Activated CD4-positive, alpha-beta T cell treated with anti-CD3 and anti-CD28 coated beads for 36 hours (primary cell): ENCODE measurements at regions of chr7 and their contacts with region 1.

Region 1: DNA sequence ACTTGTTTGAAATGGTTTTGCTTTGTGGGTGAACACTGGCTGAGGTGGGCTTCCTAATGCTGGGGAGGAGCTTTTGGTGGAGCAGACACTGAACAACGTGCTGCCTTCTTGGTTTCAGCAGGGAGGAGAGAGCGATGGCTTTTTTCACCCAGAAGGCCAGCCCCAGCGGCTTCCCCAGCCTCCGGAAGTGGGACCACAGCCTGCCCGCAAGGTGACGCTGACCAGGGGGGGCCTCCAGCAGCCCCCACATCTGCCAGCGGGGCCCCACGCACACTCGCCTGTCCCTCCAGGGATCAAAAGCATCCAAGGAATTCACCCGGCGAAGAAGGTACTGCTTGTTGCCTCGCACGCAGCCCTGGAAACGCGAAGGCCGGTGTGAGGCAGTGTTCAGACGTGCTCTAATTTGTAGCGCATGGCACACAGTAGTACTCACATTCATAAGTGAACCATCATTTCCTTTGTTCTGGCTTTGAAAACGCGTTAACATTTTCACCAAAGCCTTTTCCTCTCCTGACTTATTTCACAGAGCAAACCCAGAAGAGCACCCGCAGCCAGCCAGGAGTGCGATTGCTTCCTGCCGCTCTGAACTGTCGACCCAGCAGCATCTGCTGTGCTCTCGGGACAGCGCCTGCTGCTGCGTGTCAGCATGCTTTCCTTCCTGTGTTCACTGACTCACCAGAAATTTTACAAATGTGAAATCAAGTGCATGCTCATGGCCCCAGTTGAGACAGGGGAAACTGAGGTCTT is 48.4 kb downstream of the SHH start:
- DNase-seq: peak; percentile 84
- ATAC-seq: peak; percentile 83
- H3K4me3 Mint-ChIP-seq: peak overlapping the region; percentile 74
- H3K27ac Mint-ChIP-seq: peak overlapping the region; percentile 97
- H3K4me1 Mint-ChIP-seq: peaks cover 52% of the 10 kb centered on the region
- H3K27me3 Mint-ChIP-seq: no peaks in the 10 kb centered on the region

Region 2: GRCh38 chr7:155003376-155004214 is 760.3 kb before region 1 on chr7:
- CTCF ChIA-PET with region 1: no interaction called
- POLR2A ChIA-PET with region 1: no interaction called
- intact Hi-C with region 1: loop called in 1 of 2 experiments (anchors 2 kb)
- DNase-seq: peak; percentile 91
- ATAC-seq: peak; percentile 82
- H3K4me3 Mint-ChIP-seq: peak overlapping the region; percentile 91
- H3K27ac Mint-ChIP-seq: peak overlapping the region; percentile 85
- H3K4me1 Mint-ChIP-seq: peaks cover 12% of the 10 kb centered on the region
- H3K27me3 Mint-ChIP-seq: no peaks in the 10 kb centered on the region

Region 3: DNA sequence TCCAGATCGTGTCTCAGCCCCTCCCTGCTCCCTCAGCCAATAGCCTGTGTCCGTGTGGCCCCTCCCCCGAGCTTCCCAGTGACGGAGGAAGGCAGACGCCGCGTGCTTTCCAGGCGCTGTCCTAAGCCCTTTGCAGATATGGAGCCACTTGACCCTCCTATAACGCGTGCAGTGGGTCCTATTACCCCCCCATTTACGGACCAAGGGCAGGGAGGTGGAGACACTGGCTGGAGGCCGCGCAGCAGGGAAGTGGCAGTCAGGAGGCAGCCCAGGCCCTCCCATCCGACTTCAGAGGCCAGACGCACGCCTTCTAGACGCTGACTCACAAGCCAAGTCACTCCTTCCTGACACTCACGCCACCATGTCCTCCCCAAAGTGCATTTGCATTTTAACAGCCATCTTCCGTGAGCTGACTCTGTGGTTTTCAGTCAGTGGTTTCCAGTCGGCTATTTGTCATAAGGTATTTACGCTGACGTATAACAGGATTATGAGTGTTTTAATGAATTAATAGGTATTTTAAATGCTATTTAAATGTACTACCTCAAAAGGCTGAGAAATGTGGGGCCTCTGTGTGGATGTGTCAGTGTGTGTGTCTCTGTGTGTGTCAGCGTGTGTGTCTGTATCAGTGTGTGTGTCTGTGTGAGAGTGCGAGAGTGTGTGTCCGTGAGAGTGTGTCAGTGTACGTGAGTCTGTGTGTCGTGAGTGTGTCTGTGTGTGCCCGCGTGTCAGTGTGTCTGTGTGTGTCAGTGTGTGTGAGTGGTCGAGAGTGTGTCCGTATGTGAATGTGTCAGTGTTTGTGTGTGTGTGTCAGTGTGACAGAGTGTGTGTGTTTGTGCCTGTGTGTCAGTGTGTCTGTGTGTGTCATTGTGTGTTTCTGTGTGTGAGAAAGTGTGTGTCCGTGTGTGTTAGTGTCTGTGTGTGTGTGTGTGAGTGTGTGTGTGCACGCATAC is 558.2 kb before region 1 on chr7:
- CTCF ChIA-PET with region 1: no interaction called
- POLR2A ChIA-PET with region 1: no interaction called
- intact Hi-C with region 1: loop called in 1 of 2 experiments (anchors 1 kb)
- DNase-seq: peak; percentile 95
- ATAC-seq: peak; percentile 84
- H3K4me3 Mint-ChIP-seq: peak overlapping the region; percentile 77
- H3K27ac Mint-ChIP-seq: peak overlapping the region; percentile 100
- H3K4me1 Mint-ChIP-seq: peaks cover 60% of the 10 kb centered on the region
- H3K27me3 Mint-ChIP-seq: no peaks in the 10 kb centered on the region

Region 4: GRCh38 chr7:155371884-155372781 is 391.7 kb before region 1 on chr7:
- CTCF ChIA-PET with region 1: no interaction called
- POLR2A ChIA-PET with region 1: no interaction called
- intact Hi-C with region 1: loop called in 1 of 2 experiments (anchors 10 kb)
- DNase-seq: peak; percentile 45
- ATAC-seq: peak; percentile 74
- H3K4me3 Mint-ChIP-seq: no peak overlapping the region
- H3K27ac Mint-ChIP-seq: no peak overlapping the region
- H3K4me1 Mint-ChIP-seq: peaks cover 29% of the 10 kb centered on the region
- H3K27me3 Mint-ChIP-seq: peaks cover 65% of the 10 kb centered on the region

Region 5: DNA sequence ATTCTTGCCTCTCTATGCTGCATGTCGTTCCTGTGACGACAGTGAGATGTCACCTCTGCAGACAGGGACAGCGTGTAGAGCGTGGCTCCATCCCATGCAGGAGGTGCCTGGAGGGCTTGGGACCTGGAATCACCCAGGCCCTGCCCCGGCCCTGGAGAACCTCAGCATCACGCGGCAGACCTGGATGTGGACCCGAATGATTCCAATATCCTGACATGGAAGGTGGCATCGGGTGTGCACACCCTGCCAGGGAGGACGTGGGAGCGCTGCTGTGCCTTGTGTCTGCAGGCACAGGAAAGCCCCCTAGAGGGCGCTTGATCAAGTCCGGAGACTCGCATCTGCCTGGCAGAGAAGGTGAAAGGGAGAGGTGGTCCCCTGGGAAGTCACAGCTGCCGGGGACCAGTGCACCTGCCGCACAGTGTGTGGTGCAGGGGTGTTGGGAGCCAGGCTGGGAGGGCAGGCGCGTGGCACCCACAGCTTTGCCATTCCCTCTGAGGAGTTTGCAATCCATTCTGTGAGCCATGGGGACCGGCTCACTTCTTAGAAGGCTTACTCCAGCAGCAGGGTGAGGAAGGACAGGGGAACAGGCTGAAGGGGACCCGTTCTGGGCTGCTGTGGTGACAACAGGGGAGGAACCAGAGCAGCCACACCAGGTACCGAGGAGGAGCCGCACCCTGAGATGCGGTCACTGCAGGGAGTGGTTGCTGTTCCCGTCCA is 351.2 kb before region 1 on chr7:
- CTCF ChIA-PET with region 1: no interaction called
- POLR2A ChIA-PET with region 1: no interaction called
- intact Hi-C with region 1: loop called in 1 of 2 experiments (anchors 1 kb)
- DNase-seq: peak; percentile 77
- ATAC-seq: peak; percentile 87
- H3K4me3 Mint-ChIP-seq: no peak overlapping the region
- H3K27ac Mint-ChIP-seq: no peak overlapping the region
- H3K4me1 Mint-ChIP-seq: no peaks in the 10 kb centered on the region
- H3K27me3 Mint-ChIP-seq: peaks cover 14% of the 10 kb centered on the region

Region 6: GRCh38 chr7:155738652-155739537 is 25.0 kb before region 1 on chr7:
- CTCF ChIA-PET with region 1: interaction called, 15 read pairs
- POLR2A ChIA-PET with region 1: no interaction called
- intact Hi-C with region 1: loop called (anchors 1 kb)
- DNase-seq: peak; percentile 85
- ATAC-seq: peak; percentile 68
- H3K4me3 Mint-ChIP-seq: peak overlapping the region; percentile 21
- H3K27ac Mint-ChIP-seq: peak overlapping the region; percentile 72
- H3K4me1 Mint-ChIP-seq: peaks cover 64% of the 10 kb centered on the region
- H3K27me3 Mint-ChIP-seq: no peaks in the 10 kb centered on the region

Region 7: GRCh38 chr7:155746188-155746587 is 17.7 kb before region 1 on chr7:
- CTCF ChIA-PET with region 1: interaction called, 6 read pairs
- POLR2A ChIA-PET with region 1: no interaction called
- intact Hi-C with region 1: loop called (anchors 1 to 2 kb)
- DNase-seq: no peak
- ATAC-seq: peak; percentile 75
- H3K4me3 Mint-ChIP-seq: no peak overlapping the region
- H3K27ac Mint-ChIP-seq: peak overlapping the region; percentile 62
- H3K4me1 Mint-ChIP-seq: peaks cover 59% of the 10 kb centered on the region
- H3K27me3 Mint-ChIP-seq: no peaks in the 10 kb centered on the region

Region 8: DNA sequence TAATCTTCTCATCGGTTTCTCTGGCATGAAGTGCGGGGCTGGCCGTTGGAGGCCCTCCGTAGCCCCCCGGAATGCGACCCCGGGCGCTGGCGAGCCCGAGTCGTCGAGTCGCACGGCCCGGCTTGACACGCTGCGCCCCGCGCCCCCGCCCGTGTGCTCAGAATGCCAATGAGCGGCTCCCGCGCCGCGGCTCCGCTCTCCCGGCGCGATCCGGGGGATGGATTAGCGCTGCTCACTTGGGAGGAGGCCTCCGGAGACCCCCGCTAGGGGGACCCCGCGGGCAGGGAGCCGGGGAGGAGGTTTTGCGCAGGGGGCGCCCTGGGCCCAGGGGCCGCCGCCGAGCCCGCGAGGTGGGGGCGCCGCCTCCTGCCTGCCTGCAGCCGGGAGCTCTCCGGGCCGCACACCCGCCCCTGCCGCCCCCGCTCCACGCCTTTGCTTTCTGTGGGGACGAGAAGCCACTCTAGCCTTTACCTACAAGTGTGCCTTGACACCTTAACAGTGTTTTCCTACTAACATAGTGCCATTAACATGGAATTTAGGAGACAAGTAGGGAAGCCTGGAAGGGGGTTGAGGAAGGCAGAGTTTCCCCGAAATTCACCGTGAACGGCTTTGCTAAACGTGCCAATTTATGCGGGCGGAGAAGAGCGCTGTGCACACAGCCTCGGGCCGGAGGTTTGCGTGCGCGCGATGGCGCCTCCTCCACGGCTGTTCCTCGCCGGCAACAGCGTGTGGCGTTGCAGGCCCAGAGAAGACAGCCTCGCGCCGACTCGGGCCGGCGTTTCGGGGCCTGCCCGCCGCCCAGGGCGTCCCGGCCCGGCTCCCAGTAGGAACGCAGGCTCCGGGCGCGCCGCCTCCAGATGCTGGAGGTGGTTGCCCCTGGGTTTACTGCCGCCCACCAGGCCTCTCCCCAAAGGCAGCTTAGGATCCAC is 41.3 kb after region 1 on chr7:
- CTCF ChIA-PET with region 1: no interaction called
- POLR2A ChIA-PET with region 1: no interaction called
- intact Hi-C with region 1: no loop called
- DNase-seq: peak; percentile 78
- ATAC-seq: peak; percentile 78
- H3K4me3 Mint-ChIP-seq: no peak overlapping the region
- H3K27ac Mint-ChIP-seq: no peak overlapping the region
- H3K4me1 Mint-ChIP-seq: peaks cover 18% of the 10 kb centered on the region
- H3K27me3 Mint-ChIP-seq: peaks cover 52% of the 10 kb centered on the region